Activated B cell treated with CpG ODN at 0.5 μM for 24 hours (primary cell): ENCODE measurements at regions of chr10 and their contacts with region 1.

Region 1: DNA sequence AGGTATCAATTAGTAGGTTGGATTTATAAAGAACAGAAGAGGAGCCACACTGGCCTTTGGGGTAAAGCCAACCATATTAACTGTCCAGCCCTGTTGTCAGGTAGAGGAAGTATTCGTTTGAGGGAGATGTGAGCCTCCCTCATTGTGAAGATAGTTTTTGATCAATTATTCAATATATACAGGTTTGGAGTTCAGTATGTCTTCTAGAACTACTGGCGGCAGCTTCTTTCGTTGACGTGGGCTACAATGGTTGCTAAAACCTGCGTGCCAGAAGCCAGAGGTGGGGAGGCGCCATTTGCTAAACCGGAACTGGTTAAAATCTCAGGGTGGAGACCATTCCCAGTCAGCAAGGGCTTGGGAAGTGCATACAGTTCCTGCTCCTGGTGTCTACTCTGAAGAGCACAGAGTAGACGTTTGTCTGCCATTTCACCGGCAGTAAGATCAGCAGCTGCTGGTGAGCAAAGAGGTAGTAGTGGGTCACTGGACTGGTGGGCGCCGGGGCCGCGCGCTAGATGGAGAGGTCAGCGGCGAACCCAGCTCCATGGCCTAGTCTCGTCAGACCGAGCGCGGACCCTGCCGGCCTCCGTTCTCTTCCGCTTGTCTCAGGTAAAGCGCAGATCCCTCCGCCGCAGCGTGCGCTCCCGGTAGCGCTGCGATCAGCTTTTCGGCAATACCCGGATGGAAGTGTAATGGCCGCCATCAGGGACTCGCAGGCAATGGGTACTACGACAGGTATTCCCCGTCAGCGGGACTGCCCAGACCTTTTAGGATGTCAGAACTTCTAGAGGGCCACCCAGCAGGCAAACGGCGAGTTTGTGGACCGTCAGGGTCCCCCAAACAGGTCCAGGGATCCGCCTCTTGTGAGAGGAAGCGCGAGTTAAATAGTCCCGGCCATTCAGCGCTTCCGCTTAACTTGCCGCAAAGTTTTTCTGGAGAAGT is at the start of gene ZNF518A:
- DNase-seq: peak; percentile 87
- ATAC-seq: peak; percentile 86
- H3K4me3 Mint-ChIP-seq: peak within 1 kb of the TSS; percentile 97
- H3K27ac Mint-ChIP-seq: peak within 1 kb of the TSS; percentile 100
- H3K4me1 Mint-ChIP-seq: peaks cover 21% of the 10 kb centered on the region
- H3K27me3 Mint-ChIP-seq: peaks cover 24% of the 10 kb centered on the region
- CTCF ChIP-seq: no peak
- total RNA-seq, gene ZNF518A: 23.8 and 28.7 TPM in 2 replicates

Region 2: GRCh38 chr10:96017191-96017687 is 112.4 kb before region 1 on chr10:
- CTCF ChIA-PET with region 1: interaction called, 8 read pairs
- POLR2A ChIA-PET with region 1: no interaction called
- intact Hi-C with region 1: loop called (anchors 1 kb)
- DNase-seq: no peak
- ATAC-seq: peak; percentile 74
- H3K4me3 Mint-ChIP-seq: no peak overlapping the region
- H3K27ac Mint-ChIP-seq: no peak overlapping the region
- H3K4me1 Mint-ChIP-seq: no peaks in the 10 kb centered on the region
- H3K27me3 Mint-ChIP-seq: no peaks in the 10 kb centered on the region
- CTCF ChIP-seq: peak; percentile 52

Region 3: DNA sequence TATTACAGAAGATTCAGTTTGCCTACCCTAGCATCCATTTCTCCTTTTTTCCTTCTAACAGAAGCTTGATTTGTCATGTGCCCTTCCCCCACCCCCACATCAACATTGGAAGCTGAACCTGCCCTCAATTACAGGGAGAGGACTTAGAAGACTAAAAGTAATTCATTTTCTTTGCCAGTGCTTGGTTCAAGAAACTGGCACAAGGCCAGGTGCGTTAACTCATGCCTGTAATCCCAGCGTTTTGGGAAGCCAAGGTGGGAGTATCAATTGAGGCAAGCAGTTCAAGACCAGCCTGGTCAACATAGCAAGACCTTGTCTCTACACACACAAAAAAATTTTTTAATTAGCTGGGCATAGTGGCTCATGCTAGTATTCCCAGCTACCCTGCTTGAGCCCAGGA is 53.7 kb before region 1 on chr10:
- CTCF ChIA-PET with region 1: no interaction called
- POLR2A ChIA-PET with region 1: interaction called, 11 read pairs
- intact Hi-C with region 1: no loop called
- DNase-seq: no peak
- ATAC-seq: no peak
- H3K4me3 Mint-ChIP-seq: no peak overlapping the region
- H3K27ac Mint-ChIP-seq: no peak overlapping the region
- H3K4me1 Mint-ChIP-seq: peaks cover 4% of the 10 kb centered on the region
- H3K27me3 Mint-ChIP-seq: no peaks in the 10 kb centered on the region
- CTCF ChIP-seq: no peak

Region 4: GRCh38 chr10:96271016-96271829 is 141.6 kb after region 1 on chr10 and contains the start of gene BLNK:
- CTCF ChIA-PET with region 1: no interaction called
- POLR2A ChIA-PET with region 1: interaction called, 14 read pairs
- intact Hi-C with region 1: no loop called
- DNase-seq: peak; percentile 40
- ATAC-seq: peak; percentile 56
- H3K4me3 Mint-ChIP-seq: peak within 1 kb of the TSS; percentile 91
- H3K27ac Mint-ChIP-seq: peak within 1 kb of the TSS; percentile 98
- H3K4me1 Mint-ChIP-seq: peaks cover 81% of the 10 kb centered on the region
- H3K27me3 Mint-ChIP-seq: no peaks in the 10 kb centered on the region
- CTCF ChIP-seq: no peak
- total RNA-seq, gene BLNK: 238 and 267 TPM in 2 replicates

Region 5: DNA sequence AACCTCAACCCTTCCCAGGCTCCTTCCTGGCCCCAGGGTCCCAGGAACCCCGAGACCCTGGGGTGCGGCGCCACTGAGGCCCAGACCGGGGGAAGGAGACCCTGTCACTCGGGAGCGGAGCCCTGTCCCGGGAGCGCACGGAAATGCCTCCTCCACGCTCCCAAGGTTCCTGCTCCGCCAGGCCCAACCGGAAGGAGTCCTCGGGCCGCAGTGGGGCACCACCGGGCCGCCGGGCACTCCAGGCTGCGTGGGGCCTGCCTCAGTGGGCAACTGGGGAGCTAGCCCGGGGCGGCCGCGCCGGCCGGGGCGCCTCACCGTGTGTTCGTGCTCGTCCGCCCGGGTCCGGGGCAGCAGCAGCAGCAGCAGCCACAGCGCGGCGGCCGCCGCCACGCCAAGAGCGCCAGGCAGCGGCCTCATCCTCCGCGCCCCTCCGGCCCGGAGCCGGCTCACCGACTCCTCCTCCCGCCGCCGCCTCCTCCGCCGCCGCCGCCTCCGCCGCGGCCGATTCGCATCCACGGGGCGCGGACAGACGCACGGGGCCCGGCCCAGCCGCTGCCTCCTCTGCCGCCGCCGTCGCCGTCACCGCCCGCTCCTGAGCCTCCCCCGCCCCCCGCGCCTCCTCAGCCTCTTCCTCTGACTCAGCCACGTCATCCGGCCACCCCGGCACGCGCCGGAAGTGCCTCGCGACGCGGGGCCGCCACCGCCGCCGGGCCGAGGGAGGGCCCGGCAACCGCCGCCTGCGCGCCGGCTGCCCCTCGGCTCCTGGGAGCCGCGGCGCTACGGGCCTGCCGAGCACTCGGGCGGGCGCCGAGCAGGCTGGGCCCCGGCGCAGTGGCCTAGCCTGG is 457.0 kb after region 1 on chr10 and contains the start of gene TM9SF3:
- CTCF ChIA-PET with region 1: no interaction called
- POLR2A ChIA-PET with region 1: no interaction called
- intact Hi-C with region 1: loop called (anchors 2 kb)
- DNase-seq: peak; percentile 84
- ATAC-seq: peak; percentile 82
- H3K4me3 Mint-ChIP-seq: peak within 1 kb of the TSS; percentile 87
- H3K27ac Mint-ChIP-seq: peak within 1 kb of the TSS; percentile 71
- H3K4me1 Mint-ChIP-seq: peaks cover 36% of the 10 kb centered on the region
- H3K27me3 Mint-ChIP-seq: no peaks in the 10 kb centered on the region
- CTCF ChIP-seq: no peak
- total RNA-seq, gene TM9SF3: 61.7 and 62.7 TPM in 2 replicates